ENCODE measurements at regions of chr2 and their contacts with region 1.

Region 1: DNA sequence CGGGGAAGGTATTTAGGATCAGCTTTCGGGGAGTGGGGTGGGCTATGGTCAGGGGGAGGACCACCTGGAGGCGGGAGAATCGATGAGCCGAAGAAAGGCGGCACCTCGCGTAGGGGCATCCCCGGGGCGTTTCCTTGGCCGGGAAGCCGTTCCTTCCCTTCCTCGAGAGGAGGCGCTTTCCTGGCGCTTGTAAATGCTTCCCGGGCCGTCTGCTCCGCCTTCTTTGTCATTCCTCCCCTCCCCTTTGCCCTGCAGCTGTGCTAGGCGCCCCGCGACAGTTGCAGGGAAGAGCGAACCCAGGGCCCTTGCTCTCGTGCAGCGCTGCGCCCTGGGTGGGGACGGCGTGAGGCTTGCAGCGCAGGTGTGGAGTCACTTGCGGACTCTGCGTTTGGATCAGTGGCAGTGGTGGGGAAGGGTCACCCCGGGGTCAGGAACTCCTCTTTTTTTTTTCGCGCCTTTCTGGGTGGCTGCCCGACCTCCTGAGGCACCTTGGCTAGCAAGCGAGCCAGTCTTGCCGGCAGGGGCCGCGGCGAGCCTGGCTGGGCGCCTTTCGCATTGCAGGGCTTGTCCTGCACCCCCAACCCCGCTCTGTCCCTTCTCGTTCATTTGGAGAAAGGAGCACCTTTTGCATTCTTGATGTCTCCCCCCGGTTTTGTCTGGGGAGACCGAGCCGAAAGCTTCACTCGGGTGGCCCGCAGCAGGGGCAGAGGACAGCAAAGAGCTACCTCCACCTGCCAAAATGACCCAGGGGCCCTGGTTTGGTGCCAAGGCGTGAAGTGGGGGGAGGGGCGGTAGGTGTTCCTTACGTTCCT is 840 bp downstream of the KCNS3 start:
- DNase-seq: peak; percentile 20
- ATAC-seq: peak; percentile 48
- H3K4me3 Mint-ChIP-seq: peak overlapping the region; percentile 69
- H3K27ac Mint-ChIP-seq: no peak overlapping the region
- H3K4me1 Mint-ChIP-seq: peaks cover 15% of the 10 kb centered on the region
- H3K27me3 Mint-ChIP-seq: peaks cover 60% of the 10 kb centered on the region

Region 2: DNA sequence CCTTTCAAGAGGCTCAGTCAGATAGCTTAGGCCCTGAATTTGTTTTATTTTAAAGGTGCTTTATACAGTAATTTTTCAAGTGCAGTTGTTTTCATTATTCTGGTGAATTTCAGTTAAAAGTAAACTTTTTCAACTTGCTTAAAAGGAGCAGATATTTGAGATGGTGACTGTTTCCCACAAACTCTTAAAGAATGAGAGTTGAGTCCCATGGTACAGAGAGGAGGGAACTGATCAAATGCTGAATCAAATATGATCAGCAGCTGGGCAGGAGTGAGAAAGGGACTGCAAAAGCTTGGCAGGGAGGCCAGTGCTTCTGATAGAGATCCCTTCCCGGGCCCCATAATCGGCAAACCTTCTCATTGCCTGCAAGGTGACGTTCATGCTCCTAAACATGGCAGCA is 90.4 kb after region 1 on chr2:
- CTCF ChIA-PET with region 1: no interaction called
- POLR2A ChIA-PET with region 1: no interaction called
- intact Hi-C with region 1: no loop called
- DNase-seq: no peak
- ATAC-seq: no peak
- H3K4me3 Mint-ChIP-seq: no peak overlapping the region
- H3K27ac Mint-ChIP-seq: no peak overlapping the region
- H3K4me1 Mint-ChIP-seq: no peaks in the 10 kb centered on the region
- H3K27me3 Mint-ChIP-seq: peaks cover 5% of the 10 kb centered on the region

Region 3: DNA sequence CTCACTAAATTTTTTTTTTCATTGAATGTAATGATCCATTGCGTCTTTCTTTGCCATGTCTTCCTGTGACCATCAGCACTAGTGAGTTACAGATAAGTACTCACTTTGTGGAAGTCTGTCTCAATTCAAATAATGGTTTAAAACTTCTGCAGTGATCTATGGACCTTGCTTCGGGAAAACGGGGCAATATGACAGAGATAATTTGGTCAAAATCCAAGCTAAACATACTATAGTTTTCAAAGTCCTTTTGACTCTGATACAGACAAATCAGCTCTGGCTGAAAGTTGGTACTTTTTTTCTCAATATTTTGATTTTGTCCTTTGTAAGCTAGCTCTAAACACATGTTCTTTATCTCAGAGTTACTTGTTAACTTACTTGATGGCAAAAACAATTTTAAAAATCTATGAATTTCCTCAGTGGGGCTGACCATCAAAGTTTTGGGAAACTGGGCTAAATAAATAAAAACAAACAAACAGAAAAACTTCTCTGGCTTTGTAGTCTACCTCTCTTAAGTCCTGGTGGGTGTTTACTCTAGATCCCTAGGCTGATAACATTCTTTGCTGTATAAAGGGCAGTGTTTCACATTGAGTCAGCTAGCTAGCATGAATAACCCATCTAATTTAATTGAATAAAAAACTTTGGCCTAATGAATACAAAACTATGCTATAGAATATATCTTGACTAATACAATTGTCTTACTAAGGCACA is 353.6 kb after region 1 on chr2:
- CTCF ChIA-PET with region 1: no interaction called
- POLR2A ChIA-PET with region 1: interaction called, 12 read pairs
- intact Hi-C with region 1: no loop called
- DNase-seq: no peak
- ATAC-seq: no peak
- H3K4me3 Mint-ChIP-seq: no peak overlapping the region
- H3K27ac Mint-ChIP-seq: no peak overlapping the region
- H3K4me1 Mint-ChIP-seq: no peaks in the 10 kb centered on the region
- H3K27me3 Mint-ChIP-seq: peaks cover 9% of the 10 kb centered on the region

Region 4: DNA sequence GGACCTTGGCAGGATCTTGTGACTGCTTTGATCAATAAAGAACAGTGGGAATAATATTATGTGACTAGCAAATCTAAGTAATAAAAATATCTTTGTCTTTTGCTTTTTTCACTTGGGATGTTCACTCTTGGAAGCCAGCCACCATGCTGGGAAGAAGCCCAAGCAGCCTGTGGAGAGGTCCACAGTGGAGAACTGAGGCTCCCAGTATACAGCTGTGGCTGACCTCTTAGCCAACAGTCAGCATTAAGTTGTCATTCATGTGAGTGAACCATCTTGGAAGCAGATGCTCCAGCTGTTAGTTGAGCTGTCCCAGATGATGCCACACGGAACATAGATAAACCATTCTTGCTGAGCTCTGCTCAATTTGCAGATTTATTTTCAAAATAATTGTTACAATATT is 1319.1 kb after region 1 on chr2:
- CTCF ChIA-PET with region 1: no interaction called
- POLR2A ChIA-PET with region 1: no interaction called
- intact Hi-C with region 1: no loop called
- DNase-seq: no peak
- ATAC-seq: no peak
- H3K4me3 Mint-ChIP-seq: no peak overlapping the region
- H3K27ac Mint-ChIP-seq: no peak overlapping the region
- H3K4me1 Mint-ChIP-seq: no peaks in the 10 kb centered on the region
- H3K27me3 Mint-ChIP-seq: no peaks in the 10 kb centered on the region